GM10248 (cell line): ENCODE measurements at regions of chr14 and their contacts with region 1.

Region 1: GRCh38 chr14:76514613-76515012 is 138.7 kb downstream of the ESRRB start:
- DNase-seq: peak; percentile 43
- CTCF ChIP-seq: peak; percentile 30

Region 2: DNA sequence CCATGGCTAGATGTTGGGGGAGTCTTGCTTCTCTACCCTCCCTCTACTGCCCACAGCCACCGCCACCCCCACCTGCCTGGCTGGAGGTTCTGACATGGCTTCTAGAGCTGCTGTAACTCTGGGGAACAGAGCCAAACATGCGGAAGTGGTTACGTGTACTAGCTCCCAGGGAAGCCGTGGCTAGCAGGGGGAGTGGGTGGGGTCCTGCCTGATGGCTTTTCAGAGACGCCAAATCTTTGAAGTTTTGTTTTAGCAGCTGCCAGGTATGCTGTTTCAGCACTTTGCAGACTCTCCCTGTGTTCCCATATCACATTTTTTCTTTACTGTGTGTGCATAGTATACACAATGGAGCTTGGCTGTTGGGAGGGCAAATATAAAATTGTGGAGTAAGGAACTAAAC is 683.2 kb before region 1 on chr14:
- CTCF ChIA-PET with region 1: no interaction called
- POLR2A ChIA-PET with region 1: interaction called, 13 read pairs
- DNase-seq: no peak
- CTCF ChIP-seq: no peak

Region 3: GRCh38 chr14:76647697-76648298 is 133.2 kb after region 1 on chr14:
- CTCF ChIA-PET with region 1: interaction called, 12 read pairs
- POLR2A ChIA-PET with region 1: no interaction called
- DNase-seq: peak; percentile 69
- CTCF ChIP-seq: peak; percentile 80